ENCODE measurements at regions of chrX and their contacts with region 1.

Region 1: GRCh38 chrX:70422851-70423341 is at the start of gene GDPD2:
- DNase-seq: no peak
- H3K4me3 ChIP-seq: no peak within 1 kb of the TSS
- H3K27ac ChIP-seq: no peak within 1 kb of the TSS
- H3K4me1 ChIP-seq: no peaks in the 10 kb centered on the region
- H3K27me3 ChIP-seq: no peaks in the 10 kb centered on the region
- CTCF ChIP-seq: no peak
- EP300 ChIP-seq: no peak
- POLR2A ChIP-seq: no peak
- total RNA-seq, gene GDPD2: not detected

Region 2: DNA sequence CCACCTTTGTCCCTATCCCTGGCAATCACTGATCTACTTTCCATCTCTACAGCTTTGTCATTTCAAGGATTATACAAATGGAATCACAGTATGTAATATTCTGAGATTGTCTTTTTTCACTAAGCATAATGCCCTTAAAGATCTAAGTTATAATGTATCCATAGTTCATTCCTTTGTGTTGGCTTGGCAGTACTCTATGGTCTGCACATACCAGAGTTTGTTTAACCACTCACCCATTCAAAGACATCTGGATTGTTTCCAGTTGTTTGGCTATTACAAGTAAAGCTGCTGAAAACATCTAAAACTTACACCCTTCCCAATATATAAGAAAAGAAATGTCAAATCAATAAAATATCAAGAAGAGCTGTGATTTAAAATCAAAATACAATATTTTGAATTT is 214.4 kb before region 1 on chrX:
- intact Hi-C with region 1: loop called (anchors 10 kb)
- DNase-seq: no peak
- H3K4me3 ChIP-seq: no peak overlapping the region
- H3K27ac ChIP-seq: no peak overlapping the region
- H3K4me1 ChIP-seq: no peaks in the 10 kb centered on the region
- H3K27me3 ChIP-seq: no peaks in the 10 kb centered on the region
- CTCF ChIP-seq: no peak
- EP300 ChIP-seq: no peak
- POLR2A ChIP-seq: no peak

Region 3: GRCh38 chrX:70525733-70526132 is 102.8 kb after region 1 on chrX:
- intact Hi-C with region 1: no loop called
- DNase-seq: no peak
- H3K4me3 ChIP-seq: no peak overlapping the region
- H3K27ac ChIP-seq: no peak overlapping the region
- H3K4me1 ChIP-seq: no peaks in the 10 kb centered on the region
- H3K27me3 ChIP-seq: no peaks in the 10 kb centered on the region
- CTCF ChIP-seq: no peak
- EP300 ChIP-seq: no peak
- POLR2A ChIP-seq: no peak